ENCODE measurements at regions of chr3 and their contacts with region 1.

Region 1: GRCh38 chr3:122533931-122534334 is 19.2 kb upstream of the KPNA1 start:
- DNase-seq: peak; percentile 81
- H3K4me3 Mint-ChIP-seq: peak overlapping the region; percentile 9
- H3K27ac Mint-ChIP-seq: peak overlapping the region; percentile 63
- H3K4me1 Mint-ChIP-seq: peaks cover 46% of the 10 kb centered on the region
- H3K27me3 Mint-ChIP-seq: no peaks in the 10 kb centered on the region

Region 2: GRCh38 chr3:122415720-122416654 is 117.9 kb before region 1 on chr3 and contains the start of gene WDR5B:
- intact Hi-C with region 1: loop called (anchors 2 kb)
- DNase-seq: peak; percentile 99
- H3K4me3 Mint-ChIP-seq: peak within 1 kb of the TSS; percentile 98
- H3K27ac Mint-ChIP-seq: peak within 1 kb of the TSS; percentile 99
- H3K4me1 Mint-ChIP-seq: peaks cover 38% of the 10 kb centered on the region
- H3K27me3 Mint-ChIP-seq: peaks cover 3% of the 10 kb centered on the region
- total RNA-seq, gene WDR5B: 4.8 and 4.9 TPM in 2 replicates

Region 3: GRCh38 chr3:122484985-122485384 is 48.9 kb before region 1 on chr3:
- intact Hi-C with region 1: loop called (anchors 1 kb)
- DNase-seq: no peak
- H3K4me3 Mint-ChIP-seq: no peak overlapping the region
- H3K27ac Mint-ChIP-seq: peak overlapping the region; percentile 54
- H3K4me1 Mint-ChIP-seq: peaks cover 41% of the 10 kb centered on the region
- H3K27me3 Mint-ChIP-seq: no peaks in the 10 kb centered on the region

Region 4: GRCh38 chr3:122514123-122515019 is 19.6 kb before region 1 on chr3 and contains the start of gene KPNA1:
- intact Hi-C with region 1: loop called (anchors 1 kb)
- DNase-seq: peak; percentile 97
- H3K4me3 Mint-ChIP-seq: peak within 1 kb of the TSS; percentile 84
- H3K27ac Mint-ChIP-seq: peak within 1 kb of the TSS; percentile 91
- H3K4me1 Mint-ChIP-seq: peaks cover 26% of the 10 kb centered on the region
- H3K27me3 Mint-ChIP-seq: no peaks in the 10 kb centered on the region
- total RNA-seq, gene KPNA1: 78.4 and 79.4 TPM in 2 replicates

Region 5: DNA sequence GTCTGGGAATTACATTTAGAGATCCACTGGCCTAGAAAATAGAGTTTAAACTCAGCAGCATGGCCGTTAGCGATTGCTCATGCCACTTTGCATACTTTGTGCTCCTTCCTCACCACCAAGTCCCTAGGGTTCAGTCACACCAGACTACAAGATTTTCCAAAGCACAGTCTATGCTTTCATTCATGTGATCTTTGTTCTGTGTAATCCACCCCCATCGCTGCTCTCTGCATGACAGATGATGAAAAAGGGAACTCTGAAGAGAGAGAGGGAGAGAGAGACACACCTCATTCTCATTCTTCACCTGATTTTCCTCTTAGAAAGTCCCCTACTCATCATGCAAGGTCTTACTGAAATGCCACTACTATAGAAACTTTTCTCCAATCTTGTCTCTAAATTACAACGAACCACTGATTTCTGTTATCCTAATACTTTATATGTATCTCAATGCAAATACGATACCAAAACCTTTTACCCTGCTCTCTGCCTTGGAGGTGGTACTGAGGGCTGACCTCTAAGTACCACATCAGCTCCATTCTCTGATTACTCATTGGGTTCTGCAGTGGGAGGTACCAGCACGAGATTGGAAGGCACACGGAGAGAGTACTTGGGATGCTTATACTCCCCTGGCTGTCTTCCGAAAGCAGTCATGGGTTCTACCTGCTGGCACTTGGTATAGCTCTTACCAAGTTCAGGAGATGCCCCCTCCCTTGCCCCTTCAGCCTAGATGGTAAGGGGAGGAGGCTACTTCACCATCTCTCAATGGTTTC is 42.4 kb after region 1 on chr3:
- intact Hi-C with region 1: loop called (anchors 5 kb)
- DNase-seq: peak; percentile 67
- H3K4me3 Mint-ChIP-seq: peak overlapping the region; percentile 1
- H3K27ac Mint-ChIP-seq: peak overlapping the region; percentile 70
- H3K4me1 Mint-ChIP-seq: peaks cover 58% of the 10 kb centered on the region
- H3K27me3 Mint-ChIP-seq: no peaks in the 10 kb centered on the region